Transverse colon (tissue), 4 donors: ENCODE measurements at regions of chr2 and their contacts with region 1.

Region 1: DNA sequence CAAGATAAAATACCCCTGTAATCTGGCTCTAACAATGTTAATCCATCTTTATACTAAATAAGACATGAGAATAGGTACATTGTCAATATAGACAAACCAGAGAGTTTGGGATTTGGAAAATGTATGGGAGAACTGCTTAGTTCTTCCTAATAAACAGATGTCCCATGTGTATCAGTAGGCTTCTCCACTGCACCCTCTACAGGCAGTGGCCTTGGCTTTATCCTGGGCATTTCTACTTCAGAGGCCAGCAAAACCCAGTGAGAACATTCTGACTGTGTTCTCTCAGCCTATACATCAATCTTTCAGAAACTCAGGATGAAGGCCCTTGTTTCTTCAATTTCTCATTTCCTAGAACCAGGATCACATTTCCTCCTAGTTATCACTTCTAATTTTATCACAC is 1167.5 kb upstream of the ACVR2A start:
- DNase-seq: no peak
- H3K4me3 ChIP-seq: no peak overlapping the region
- H3K27ac ChIP-seq: no peak overlapping the region
- H3K4me1 ChIP-seq: no peaks in the 10 kb centered on the region
- H3K27me3 ChIP-seq: no peaks in the 10 kb centered on the region
- CTCF ChIP-seq: no peak
- EP300 ChIP-seq: no peak
- POLR2A ChIP-seq: no peak

Region 2: GRCh38 chr2:146412625-146413024 is 264.7 kb before region 1 on chr2:
- in situ Hi-C with region 1: no loop called
- intact Hi-C with region 1: loop called (anchors 10 kb)
- DNase-seq: no peak
- H3K4me3 ChIP-seq: no peak overlapping the region
- H3K27ac ChIP-seq: no peak overlapping the region
- H3K4me1 ChIP-seq: no peaks in the 10 kb centered on the region
- H3K27me3 ChIP-seq: no peaks in the 10 kb centered on the region
- CTCF ChIP-seq: no peak
- EP300 ChIP-seq: no peak
- POLR2A ChIP-seq: no peak

Region 3: DNA sequence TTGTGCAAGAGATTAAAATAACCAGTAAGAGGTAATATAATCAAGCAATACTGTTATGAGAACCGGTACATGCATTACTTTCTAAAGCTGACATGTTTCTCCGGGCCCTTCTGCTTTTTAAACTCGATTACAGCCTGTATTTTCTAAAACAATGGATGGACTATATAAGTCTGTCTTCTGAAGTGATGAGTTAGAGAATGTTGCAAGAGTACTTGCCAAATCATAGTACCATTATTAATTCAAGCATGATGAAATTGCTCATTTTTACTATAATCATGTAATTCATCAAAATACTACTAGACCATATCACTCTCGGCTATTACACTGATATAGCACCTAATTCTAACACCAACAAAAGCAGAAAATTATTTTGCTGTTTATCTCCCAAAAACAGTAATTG is 72.8 kb before region 1 on chr2:
- in situ Hi-C with region 1: no loop called
- intact Hi-C with region 1: no loop called
- DNase-seq: no peak
- H3K4me3 ChIP-seq: no peak overlapping the region
- H3K27ac ChIP-seq: no peak overlapping the region
- H3K4me1 ChIP-seq: peaks cover 0 to 5% (median 0%) of the 10 kb centered on the region in 4 donors
- H3K27me3 ChIP-seq: no peaks in the 10 kb centered on the region
- CTCF ChIP-seq: no peak
- EP300 ChIP-seq: no peak
- POLR2A ChIP-seq: no peak